Posterior cingulate gyrus (tissue), 11 donors: ENCODE measurements at regions of chr6 and their contacts with region 1.

Region 1: GRCh38 chr6:26520853-26521599 is 17.1 kb upstream of the HMGN4 start:
- DNase-seq: peak; percentile 72 to 96 (median 80)

Region 2: DNA sequence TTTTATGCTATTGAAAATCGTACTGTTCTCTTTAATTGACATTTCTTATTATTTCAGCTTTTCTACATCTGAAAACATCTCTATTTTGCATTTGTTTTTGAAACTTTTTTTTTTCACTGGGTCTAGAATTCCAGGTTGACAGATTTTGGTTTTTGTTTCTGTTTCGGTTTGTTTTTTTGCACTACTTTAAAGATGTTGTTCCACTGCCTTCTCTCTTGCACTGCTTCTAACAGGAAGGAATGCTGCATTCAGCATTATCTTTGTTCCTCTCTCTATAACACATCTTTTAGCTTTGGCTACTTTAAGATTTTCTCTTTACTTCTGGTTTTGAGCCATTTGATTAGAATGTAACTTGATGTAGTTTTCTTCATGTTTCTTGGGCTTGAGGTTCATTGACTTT is 669.1 kb before region 1 on chr6:
- intact Hi-C with region 1: no loop called
- DNase-seq: no peak

Region 3: DNA sequence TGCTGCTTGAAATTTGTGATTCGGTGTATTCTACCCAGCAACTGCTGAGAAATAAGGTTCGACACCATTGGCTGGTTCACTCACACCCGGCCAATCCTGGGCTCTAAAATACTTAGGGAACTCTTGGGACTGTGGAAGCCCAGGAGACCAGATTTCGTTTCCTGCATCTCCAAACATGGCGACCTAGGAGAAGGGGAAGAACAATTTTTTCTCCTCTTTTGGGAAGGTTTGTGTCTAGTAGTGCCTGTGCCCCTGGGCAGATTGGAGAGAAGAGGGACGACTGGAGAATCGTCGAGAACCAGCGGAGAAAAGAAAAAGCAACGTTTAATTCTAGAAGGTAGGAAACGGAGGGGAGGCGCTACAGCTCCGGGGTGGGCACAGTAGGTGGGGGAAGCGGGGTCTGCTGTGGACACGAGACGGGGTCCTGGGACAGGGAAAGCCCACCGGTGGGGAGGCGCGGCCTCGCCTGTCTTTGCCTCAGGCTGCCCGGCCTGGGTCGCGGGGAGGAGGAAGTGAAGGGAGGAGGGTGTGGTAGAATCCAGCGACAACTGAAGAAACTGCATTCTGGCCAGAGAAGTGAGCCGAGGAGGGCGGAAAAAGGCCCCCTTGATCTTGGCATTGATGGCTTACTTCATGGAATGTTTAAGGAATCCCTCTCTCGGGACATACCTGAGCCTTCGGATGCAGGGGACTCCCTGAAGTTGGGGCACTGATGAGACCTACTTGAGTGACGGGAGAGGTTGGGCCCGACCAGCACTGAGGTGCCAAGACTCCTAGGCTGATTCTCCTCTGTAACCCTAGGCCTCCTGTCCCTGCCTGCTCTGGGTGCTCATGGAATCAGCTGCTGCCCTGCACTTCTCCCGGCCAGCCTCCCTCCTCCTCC is 63.0 kb before region 1 on chr6 and contains the start of gene BTN2A1:
- intact Hi-C with region 1: loop called (anchors 10 kb)
- DNase-seq: peak; percentile 63 to 97 (median 77)

Region 4: DNA sequence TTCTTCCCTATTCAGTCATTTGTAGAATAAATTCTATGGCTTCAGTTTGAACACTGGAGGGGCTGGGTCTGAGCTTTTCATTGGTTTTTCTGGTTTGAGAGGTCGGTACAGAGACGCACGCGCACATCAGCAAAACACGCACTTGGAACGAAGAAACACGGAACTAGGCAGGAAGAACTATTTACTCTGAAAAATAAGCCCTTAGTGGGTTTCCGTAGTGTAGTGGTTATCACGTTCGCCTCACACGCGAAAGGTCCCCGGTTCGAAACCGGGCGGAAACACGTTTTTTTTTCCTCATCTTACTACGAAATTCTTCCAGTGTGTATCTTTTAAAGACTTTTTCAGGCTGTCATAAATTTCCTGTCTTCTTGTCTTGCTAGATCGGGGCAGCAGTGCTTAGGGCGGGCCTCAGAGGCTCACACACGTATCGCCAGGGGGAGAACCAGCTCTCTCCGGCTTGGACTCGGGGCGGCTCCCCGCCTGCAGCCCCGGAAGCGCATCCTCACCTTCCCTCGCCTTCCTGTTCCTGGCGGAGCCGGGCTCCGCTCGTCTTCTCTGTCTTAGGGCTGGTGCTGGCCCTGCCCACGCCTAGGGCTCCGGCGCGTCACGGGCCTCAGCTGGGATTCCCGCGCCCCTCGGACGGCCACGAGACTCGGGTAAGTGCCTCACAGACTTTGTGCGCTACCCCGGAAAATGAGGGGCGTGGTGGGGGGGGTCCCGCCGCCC is 17.0 kb after region 1 on chr6 and contains the start of gene HMGN4:
- intact Hi-C with region 1: loop called (anchors 2 kb)
- DNase-seq: peak; percentile 66 to 98 (median 81)